Cardiac septum (tissue), 1 donor: ENCODE measurements at regions of chr11 and their contacts with region 1.

Region 1: DNA sequence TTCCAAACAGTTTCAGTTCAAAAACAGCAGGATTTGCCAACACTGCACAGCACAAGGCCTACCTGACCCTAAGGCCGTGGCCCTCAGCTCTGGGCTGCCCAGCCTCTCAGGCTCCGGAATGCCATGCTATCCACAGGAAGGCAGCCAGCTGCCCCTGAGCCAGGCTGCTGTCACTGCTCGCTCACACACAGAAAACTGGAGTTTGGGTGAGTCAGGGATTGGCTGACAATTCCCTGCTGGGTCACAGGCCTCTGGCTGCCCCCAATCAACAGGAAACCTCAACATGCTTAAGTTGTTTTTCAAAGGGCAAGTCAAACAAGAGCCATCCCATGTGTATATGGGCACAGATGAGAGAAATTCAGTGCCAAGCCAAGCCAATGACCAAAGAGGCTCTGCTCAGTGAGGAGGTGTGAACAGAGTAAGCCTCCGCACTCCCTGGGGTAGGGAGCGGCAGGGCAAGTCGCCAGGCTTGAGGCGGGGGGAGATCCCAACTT is 50.2 kb downstream of the RPL27A start:
- DNase-seq: peak; percentile 83

Region 2: GRCh38 chr11:8717876-8718753 is 14.7 kb before region 1 on chr11:
- intact Hi-C with region 1: loop called (anchors 2 kb)
- DNase-seq: no peak